HepG2 (cell line): ENCODE measurements at regions of chr7 and their contacts with region 1.

Region 1: DNA sequence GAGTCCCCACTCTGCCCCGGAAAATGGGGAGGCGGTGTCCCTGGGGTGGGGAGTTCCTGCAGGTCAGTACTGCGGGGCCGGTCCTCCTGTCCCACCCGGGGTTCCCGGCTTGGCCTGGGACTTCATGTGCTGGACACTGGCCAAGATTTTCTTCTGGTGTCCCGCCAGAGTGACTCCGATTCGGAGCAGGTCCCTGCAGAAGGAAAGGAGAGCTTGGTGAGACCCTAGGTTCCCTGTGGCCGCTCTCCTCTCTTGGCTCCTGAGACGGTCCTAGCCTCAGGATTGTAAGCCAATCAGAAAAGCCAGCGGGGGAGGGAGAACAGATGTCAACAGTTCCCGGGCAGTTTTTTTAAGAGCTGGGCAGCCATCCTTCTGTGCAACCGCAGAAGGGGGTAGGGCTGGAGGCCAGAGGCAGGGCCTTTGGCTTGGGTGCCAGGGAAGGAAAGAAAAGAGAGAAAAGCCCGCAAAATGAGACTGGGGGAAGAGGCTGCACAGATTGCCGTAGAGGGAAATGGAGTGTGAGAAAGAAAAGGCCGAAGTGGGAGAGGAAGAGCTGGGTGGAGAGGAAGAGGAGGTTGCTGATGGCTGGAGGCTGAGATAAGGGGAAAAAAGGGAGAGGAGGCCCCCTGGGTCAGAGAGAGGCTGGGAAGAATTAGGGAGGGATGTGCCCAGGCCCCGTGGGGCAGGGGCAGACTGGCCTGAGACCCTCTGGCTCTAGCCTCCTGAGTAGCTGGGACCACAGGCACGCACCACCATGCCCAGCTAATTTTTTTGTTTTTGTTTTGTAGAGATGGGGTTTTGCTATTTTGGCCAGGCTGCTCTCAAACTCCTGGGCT is 23.7 kb downstream of the EPHB4 start:
- DNase-seq: peak; percentile 17
- ATAC-seq: no peak
- H3K4me3 ChIP-seq: no peak overlapping the region
- H3K27ac ChIP-seq: peak overlapping the region; percentile 31
- H3K4me1 ChIP-seq: peaks cover 66% of the 10 kb centered on the region
- H3K27me3 ChIP-seq: no peaks in the 10 kb centered on the region
- CTCF ChIP-seq: no peak
- EP300 ChIP-seq: no peak
- POLR2A ChIP-seq: no peak
- RAD21 ChIP-seq: no peak

Region 2: DNA sequence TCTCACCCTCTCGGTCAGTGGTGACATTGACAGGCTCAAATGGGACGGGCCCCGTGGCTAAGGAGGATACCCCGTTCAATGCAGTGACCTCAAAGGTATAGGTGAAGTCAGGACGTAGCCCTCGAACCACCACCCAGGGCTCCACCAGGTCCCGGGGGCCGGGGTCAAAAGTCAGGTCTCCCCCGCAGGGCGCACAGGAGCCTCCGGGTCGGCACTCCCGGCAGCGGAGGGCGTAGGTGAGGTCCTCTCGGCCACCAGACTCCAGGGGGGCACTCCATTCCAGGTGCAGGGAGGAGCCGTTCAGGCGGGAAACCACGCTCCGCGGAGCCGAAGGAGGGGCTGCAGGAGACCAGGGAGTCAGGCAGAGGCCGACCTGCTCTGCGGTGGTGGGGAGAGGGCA is 15.9 kb after region 1 on chr7:
- CTCF ChIA-PET with region 1: no interaction called
- POLR2A ChIA-PET with region 1: interaction called, 42 read pairs
- in situ Hi-C with region 1: no loop called
- intact Hi-C with region 1: no loop called
- DNase-seq: no peak
- ATAC-seq: no peak
- H3K4me3 ChIP-seq: no peak overlapping the region
- H3K27ac ChIP-seq: no peak overlapping the region
- H3K4me1 ChIP-seq: peaks cover 36% of the 10 kb centered on the region
- H3K27me3 ChIP-seq: no peaks in the 10 kb centered on the region
- CTCF ChIP-seq: no peak
- EP300 ChIP-seq: no peak
- POLR2A ChIP-seq: no peak
- RAD21 ChIP-seq: no peak

Region 3: GRCh38 chr7:100827330-100828227 is 24.0 kb after region 1 on chr7 and contains the start of gene EPHB4:
- CTCF ChIA-PET with region 1: interaction called, 5 read pairs
- POLR2A ChIA-PET with region 1: interaction called, 69 read pairs
- in situ Hi-C with region 1: no loop called
- intact Hi-C with region 1: loop called (anchors 1 kb)
- DNase-seq: peak; percentile 90
- ATAC-seq: peak; percentile 81
- H3K4me3 ChIP-seq: peak within 1 kb of the TSS; percentile 81 to 90 (median 87)
- H3K27ac ChIP-seq: peak within 1 kb of the TSS; percentile 69
- H3K4me1 ChIP-seq: peaks cover 71% of the 10 kb centered on the region
- H3K27me3 ChIP-seq: no peaks in the 10 kb centered on the region; a peak in 2 of 5 replicates
- CTCF ChIP-seq: peak; percentile 85
- EP300 ChIP-seq: no peak
- POLR2A ChIP-seq: peak; percentile 51 to 73
- RAD21 ChIP-seq: peak; percentile 67; the same call in 1 of the 2 replicates
- total RNA-seq, gene EPHB4: 43.7 and 69.6 TPM in 2 replicates

Region 4: DNA sequence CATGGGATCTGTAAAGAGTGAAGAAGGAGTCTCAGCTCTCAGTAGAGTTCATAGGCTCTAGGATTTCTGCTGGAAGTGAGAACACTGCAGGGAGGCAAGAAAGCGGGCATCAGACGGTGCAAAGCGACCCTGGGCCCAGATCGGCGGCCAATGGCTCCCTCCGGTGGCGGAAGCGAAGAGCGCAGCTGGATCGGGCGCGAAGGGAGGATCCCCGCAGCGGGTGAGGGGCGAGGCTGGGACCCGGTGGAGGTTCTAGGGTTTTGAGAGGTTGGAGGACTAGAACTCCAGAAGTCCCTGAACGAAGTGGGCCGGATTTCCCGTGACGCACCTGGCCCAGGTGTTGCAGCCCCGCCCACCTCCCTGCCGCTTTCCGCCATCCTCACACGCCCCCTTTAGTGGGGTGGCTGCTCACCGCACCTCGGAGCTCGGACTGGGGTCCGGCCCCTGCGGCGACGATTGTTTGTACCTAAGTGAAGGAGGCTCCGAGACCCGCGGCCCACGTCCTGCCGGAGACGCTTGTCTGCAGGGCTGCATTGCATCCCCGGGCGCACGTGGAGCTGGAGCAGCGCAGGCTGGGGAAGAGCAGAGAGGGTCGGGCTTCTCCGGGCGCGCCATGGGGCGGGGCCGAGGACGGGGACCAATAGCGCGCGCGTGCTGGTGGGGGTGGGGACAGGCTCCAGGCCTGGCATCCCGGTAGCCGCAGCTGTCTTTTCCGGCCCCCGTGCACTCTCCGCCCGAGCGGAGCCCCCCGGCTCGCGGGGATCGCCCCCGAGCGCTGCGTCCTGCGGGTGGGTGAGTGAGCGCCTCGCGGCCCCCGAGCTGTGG is 48.6 kb after region 1 on chr7 and contains the start of gene SLC12A9:
- CTCF ChIA-PET with region 1: interaction called, 61 read pairs
- POLR2A ChIA-PET with region 1: interaction called, 66 read pairs
- in situ Hi-C with region 1: loop called (anchors 10 kb)
- intact Hi-C with region 1: loop called (anchors 1 kb)
- DNase-seq: peak; percentile 73
- ATAC-seq: peak; percentile 99
- H3K4me3 ChIP-seq: peak within 1 kb of the TSS; percentile 62 to 87 (median 85)
- H3K27ac ChIP-seq: no peak within 1 kb of the TSS
- H3K4me1 ChIP-seq: peaks cover 23% of the 10 kb centered on the region
- H3K27me3 ChIP-seq: no peaks in the 10 kb centered on the region; a peak in 1 of 5 replicates
- CTCF ChIP-seq: peak; percentile 97
- EP300 ChIP-seq: no peak
- POLR2A ChIP-seq: peak in 1 of 2 experiments; percentile 59; a peak in 2 of 4 replicates
- RAD21 ChIP-seq: peak; percentile 97
- total RNA-seq, gene SLC12A9: 5.4 and 16.6 TPM in 2 replicates

Region 5: DNA sequence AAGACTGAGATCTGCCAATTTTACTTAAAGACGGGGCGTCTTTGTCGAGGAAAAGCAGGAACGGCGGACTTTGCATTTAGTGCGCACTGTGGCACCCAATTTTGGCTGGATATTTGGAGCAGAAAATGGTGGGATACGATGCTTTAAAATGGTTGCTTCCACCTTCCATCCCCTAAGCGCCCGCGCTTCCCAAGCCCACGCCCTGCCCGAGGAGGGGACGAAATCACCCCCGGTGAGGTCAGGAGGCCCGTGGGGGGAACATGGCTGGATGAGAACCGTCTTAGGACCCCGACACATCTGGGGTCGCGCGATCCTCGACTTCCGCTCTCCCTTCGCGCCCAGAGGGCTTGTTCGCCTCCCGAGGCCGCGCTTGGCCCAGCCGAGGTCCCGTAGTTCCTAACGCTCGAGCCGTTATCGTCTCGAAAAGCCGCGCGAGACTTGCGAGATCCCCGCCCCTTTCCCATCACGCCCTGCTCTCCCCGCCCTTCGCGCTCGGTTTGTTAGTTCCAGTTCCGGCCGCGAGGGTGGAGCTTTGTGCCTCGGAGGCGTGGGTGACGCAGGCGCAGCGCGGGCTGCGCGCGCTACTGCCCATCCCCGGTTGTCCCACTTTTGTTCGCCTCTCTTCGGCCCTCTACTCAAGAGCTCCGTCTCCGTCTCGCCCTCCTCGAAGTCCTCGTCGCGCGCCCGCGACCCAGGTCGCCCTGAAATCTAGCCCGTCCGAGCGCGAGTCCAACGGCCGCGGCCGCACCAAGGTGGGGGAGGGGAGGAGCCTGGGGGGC is 71.2 kb after region 1 on chr7 and contains the start of gene SRRT:
- CTCF ChIA-PET with region 1: no interaction called
- POLR2A ChIA-PET with region 1: interaction called, 17 read pairs
- in situ Hi-C with region 1: no loop called
- intact Hi-C with region 1: no loop called
- DNase-seq: peak; percentile 94
- ATAC-seq: peak; percentile 94
- H3K4me3 ChIP-seq: peak within 1 kb of the TSS; percentile 84 to 89 (median 86)
- H3K27ac ChIP-seq: peak within 1 kb of the TSS; percentile 87
- H3K4me1 ChIP-seq: peaks cover 45% of the 10 kb centered on the region
- H3K27me3 ChIP-seq: peaks cover 0 to 2% of the 10 kb centered on the region in 2 experiments; a peak in 1 of 5 replicates
- CTCF ChIP-seq: peak; percentile 16
- EP300 ChIP-seq: peak in 1 of 2 experiments; percentile 29; a peak in 1 of 4 replicates
- POLR2A ChIP-seq: peak; percentile 91 to 98
- RAD21 ChIP-seq: no peak; the same call in 1 of the 2 replicates
- total RNA-seq, gene SRRT: 79.1 and 106 TPM in 2 replicates

Region 6: DNA sequence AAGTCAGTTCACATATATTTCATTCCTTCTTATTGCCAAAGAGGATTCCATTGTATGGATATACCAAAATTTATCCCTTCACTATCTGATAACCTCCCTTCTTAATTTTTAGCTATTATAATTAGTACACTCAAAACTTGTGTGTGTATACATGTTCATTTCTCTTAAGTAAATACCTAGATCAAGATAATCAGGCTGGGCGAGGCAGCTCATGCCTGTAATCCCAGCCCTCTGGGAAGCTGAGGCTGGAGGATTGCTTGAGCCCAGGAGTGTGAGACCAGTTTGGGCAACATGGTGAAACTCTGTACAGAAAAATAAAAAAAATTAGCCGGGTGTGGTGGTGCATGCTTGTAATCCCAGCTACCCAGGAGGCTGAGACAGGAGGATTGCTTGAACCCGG is 107.9 kb after region 1 on chr7:
- CTCF ChIA-PET with region 1: no interaction called
- POLR2A ChIA-PET with region 1: no interaction called
- in situ Hi-C with region 1: no loop called
- intact Hi-C with region 1: no loop called
- DNase-seq: no peak
- ATAC-seq: no peak
- H3K4me3 ChIP-seq: no peak overlapping the region
- H3K27ac ChIP-seq: no peak overlapping the region
- H3K4me1 ChIP-seq: peaks cover 19% of the 10 kb centered on the region
- H3K27me3 ChIP-seq: no peaks in the 10 kb centered on the region
- CTCF ChIP-seq: no peak
- EP300 ChIP-seq: no peak
- POLR2A ChIP-seq: no peak
- RAD21 ChIP-seq: no peak

Region 7: DNA sequence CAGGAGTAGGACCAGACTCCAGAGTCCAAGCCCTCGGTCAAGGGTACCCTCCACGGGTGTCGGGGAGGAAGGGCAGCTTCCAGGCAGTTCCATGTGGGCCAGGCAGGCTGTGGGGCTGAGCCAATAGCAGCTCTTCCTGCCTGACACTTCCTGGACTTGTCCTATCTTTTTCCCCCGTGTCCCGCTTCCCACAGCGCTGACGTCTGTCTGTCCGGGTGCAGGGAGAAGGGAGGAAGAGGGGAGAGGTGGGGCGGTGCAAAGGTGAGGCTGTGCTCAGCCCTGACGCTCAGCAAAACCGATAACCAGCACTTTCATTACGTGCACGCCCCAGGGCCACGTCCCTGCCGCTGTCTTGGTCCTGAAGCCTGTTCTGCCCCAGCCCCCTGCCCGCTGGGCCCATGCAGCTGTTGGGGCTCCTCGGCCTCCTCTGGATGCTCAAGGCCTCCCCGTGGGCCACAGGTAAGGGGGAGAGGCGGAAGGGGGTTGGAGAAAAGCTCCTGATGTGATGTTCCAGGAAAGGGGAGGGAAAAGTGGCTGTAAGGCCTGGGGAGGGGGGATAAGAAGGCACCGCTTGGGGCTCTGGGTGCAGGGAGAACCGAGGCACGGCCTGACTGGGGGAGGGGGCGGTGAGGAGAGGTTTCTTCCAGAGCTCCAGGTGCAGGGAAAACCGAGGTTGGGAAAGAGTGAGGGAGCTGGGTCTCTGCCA is 145.8 kb after region 1 on chr7 and contains the start of gene MUC3A:
- CTCF ChIA-PET with region 1: no interaction called
- POLR2A ChIA-PET with region 1: no interaction called
- in situ Hi-C with region 1: no loop called
- intact Hi-C with region 1: no loop called
- DNase-seq: no peak
- ATAC-seq: peak; percentile 75
- H3K4me3 ChIP-seq: peak within 1 kb of the TSS in 2 of 3 experiments; percentile 28 to 58; a peak in 3 of 6 replicates
- H3K27ac ChIP-seq: no peak within 1 kb of the TSS
- H3K4me1 ChIP-seq: peaks cover 12% of the 10 kb centered on the region; the same call in 1 of the 2 replicates
- H3K27me3 ChIP-seq: peaks cover 2 to 18% of the 10 kb centered on the region in 2 experiments; a peak in 3 of 5 replicates
- CTCF ChIP-seq: no peak
- EP300 ChIP-seq: no peak
- POLR2A ChIP-seq: no peak
- RAD21 ChIP-seq: no peak
- total RNA-seq, gene MUC3A: not detected in 2 replicates